ENCODE measurements at regions of chr9 and their contacts with region 1.

Region 1: DNA sequence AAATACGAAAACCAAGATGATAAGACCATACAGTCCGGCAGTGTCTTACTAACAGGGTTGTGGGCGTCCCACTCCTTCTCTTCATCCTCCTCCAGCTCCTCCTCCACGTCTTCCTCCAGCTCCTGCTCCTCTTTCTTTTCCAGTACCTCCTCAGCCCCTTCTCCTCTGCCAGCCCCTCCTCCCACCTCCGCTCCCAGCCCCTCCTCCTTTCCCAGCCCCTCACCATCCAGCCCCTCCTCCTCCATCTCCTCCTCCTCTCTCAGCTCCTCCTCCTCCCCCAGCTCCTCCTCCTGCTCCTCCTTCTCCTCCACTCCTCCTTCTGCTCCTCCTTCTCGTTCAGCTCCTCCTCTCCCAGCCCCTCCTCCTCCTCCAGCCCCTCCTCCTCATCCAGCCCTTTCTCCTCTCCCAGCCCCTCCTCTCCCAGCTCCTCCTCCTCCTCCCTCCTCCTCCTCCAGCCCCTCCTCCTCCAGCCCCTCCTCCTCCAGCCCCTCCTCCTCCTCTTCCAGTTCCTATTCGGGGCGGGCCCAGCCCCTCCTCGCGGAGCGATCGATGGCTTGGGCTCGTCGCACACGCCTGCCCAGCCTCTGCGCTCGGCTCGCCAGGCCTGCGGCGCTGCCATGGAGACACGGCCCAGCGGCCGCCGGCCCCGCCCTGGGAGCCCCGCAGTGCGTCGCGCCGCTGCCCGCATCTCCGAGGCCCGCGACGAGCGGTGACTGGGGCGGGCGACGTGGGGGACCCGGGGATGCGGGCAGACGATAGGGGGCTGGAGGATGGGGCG is at the start of gene BRD3OS:
- DNase-seq: peak; percentile 88 to 97
- H3K4me3 ChIP-seq: peak within 1 kb of the TSS; percentile 72
- H3K27ac ChIP-seq: no peak within 1 kb of the TSS
- H3K4me1 ChIP-seq: peaks cover 10% of the 10 kb centered on the region
- H3K27me3 ChIP-seq: no peaks in the 10 kb centered on the region
- CTCF ChIP-seq: no peak
- total RNA-seq, gene BRD3OS: 23.7 and 26.2 TPM in 2 replicates

Region 2: GRCh38 chr9:133742849-133743444 is 282.1 kb before region 1 on chr9:
- CTCF ChIA-PET with region 1: interaction called, 10 read pairs
- POLR2A ChIA-PET with region 1: no interaction called
- intact Hi-C with region 1: no loop called
- DNase-seq: peak; percentile 40 to 88
- H3K4me3 ChIP-seq: no peak overlapping the region
- H3K27ac ChIP-seq: no peak overlapping the region
- H3K4me1 ChIP-seq: no peaks in the 10 kb centered on the region
- H3K27me3 ChIP-seq: peaks cover 42% of the 10 kb centered on the region
- CTCF ChIP-seq: peak; percentile 99

Region 3: DNA sequence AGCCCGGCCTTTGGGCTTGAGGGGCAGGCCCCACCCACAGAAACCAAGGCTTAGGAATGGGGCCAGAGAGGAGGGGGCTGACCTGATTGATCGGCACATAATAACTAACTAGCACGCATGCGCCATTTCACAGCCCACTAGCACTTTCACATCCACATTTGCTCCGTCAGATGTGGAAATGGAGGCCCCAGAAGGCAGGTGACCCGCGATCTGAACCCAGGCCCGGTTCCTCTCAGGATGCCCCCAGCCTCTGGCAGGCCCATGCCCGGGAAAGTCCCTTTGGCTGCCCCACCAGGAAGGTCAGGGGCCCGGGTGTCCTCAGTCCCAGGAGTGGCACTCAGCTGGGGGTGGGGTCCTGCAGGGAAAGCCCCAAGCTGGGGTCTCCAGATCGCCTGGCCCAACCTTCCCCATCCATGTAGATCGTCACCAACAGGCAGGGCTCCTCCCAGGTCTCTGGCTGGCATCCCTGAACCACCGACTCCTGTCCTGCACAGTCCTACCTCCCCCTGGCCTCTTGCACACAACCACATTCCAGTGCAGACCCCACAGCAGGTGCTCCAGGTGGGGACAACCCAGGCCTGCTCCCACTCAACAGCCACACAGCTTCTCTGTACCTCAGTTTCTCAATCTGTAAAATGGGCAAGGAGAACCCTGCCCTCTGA is 79.6 kb before region 1 on chr9:
- CTCF ChIA-PET with region 1: no interaction called
- POLR2A ChIA-PET with region 1: no interaction called
- intact Hi-C with region 1: no loop called
- DNase-seq: no peak
- H3K4me3 ChIP-seq: no peak overlapping the region
- H3K27ac ChIP-seq: no peak overlapping the region
- H3K4me1 ChIP-seq: no peaks in the 10 kb centered on the region
- H3K27me3 ChIP-seq: no peaks in the 10 kb centered on the region
- CTCF ChIP-seq: no peak

Region 4: GRCh38 chr9:134045841-134046544 is 21.0 kb after region 1 on chr9:
- CTCF ChIA-PET with region 1: interaction called, 19 read pairs
- POLR2A ChIA-PET with region 1: interaction called, 4 read pairs
- intact Hi-C with region 1: no loop called
- DNase-seq: no peak
- H3K4me3 ChIP-seq: no peak overlapping the region
- H3K27ac ChIP-seq: no peak overlapping the region
- H3K4me1 ChIP-seq: no peaks in the 10 kb centered on the region
- H3K27me3 ChIP-seq: no peaks in the 10 kb centered on the region
- CTCF ChIP-seq: no peak

Region 5: DNA sequence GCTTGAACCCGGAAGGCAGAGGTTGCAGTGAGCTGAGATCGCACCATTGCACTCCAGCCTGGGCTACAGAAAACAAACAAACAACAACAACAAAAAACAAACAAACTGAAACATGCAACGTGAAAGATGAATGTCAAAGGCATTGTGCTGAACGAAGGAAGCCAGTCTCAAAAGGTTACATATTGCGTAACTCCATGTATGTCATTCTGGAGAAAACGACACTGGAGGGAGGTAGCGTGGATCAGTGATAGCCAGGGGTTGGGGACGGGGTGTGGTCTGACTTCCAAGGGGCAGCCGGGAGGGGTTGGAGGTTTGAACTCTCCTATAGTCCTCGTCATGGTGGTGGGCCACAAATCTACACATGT is 98.7 kb after region 1 on chr9:
- CTCF ChIA-PET with region 1: no interaction called
- POLR2A ChIA-PET with region 1: no interaction called
- intact Hi-C with region 1: no loop called
- DNase-seq: no peak
- H3K4me3 ChIP-seq: no peak overlapping the region
- H3K27ac ChIP-seq: no peak overlapping the region
- H3K4me1 ChIP-seq: no peaks in the 10 kb centered on the region
- H3K27me3 ChIP-seq: 0 out of 2 replicates have a peak, but pooled peaks cover 3% of the 10 kb centered on the region
- CTCF ChIP-seq: no peak

Region 6: GRCh38 chr9:134135343-134136118 is 110.5 kb after region 1 on chr9 and contains the start of gene WDR5:
- CTCF ChIA-PET with region 1: interaction called, 13 read pairs
- POLR2A ChIA-PET with region 1: interaction called, 6 read pairs
- intact Hi-C with region 1: loop called (anchors 1 kb)
- DNase-seq: peak; percentile 60 to 91
- H3K4me3 ChIP-seq: peak within 1 kb of the TSS; percentile 96
- H3K27ac ChIP-seq: peak within 1 kb of the TSS; percentile 41; the same call in 1 of the 2 replicates
- H3K4me1 ChIP-seq: peaks cover 31% of the 10 kb centered on the region
- H3K27me3 ChIP-seq: no peaks in the 10 kb centered on the region
- CTCF ChIP-seq: peak; percentile 29; the same call in 1 of the 2 replicates
- total RNA-seq, gene WDR5: 53.4 and 54.9 TPM in 2 replicates

Region 7: DNA sequence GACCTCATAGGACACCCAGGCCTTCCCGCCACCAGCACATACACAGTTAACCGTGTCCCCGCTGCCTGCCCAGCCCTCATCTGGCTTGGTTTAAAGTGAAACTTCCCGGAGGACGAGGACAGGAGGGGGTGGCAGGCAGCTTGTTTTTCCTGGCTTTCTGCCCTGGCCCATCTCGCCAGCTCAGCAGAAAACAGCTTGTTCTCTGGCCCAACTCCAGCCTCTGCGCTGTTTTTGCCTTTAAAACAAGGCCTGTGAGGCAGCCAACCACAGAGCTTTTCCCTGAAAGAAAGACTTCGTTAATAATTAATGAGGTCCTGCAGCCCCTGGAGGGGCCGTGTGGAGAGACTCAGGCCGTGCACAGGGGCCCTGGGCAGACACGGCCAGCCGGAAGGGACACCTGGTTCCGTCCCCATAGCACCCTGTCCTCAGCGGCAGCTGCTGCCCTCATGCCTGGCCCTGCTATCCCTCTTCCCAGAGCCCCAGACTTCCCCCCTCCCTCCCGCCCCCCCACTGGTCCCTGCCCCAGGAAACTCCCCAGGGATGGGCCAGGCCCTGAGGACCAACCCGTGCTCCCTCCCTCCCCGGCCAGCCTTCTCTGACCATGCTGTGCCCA is 410.0 kb after region 1 on chr9:
- CTCF ChIA-PET with region 1: no interaction called
- POLR2A ChIA-PET with region 1: interaction called, 18 read pairs
- intact Hi-C with region 1: no loop called
- DNase-seq: peak in 1 of 2 experiments; percentile 74
- H3K4me3 ChIP-seq: no peak overlapping the region
- H3K27ac ChIP-seq: no peak overlapping the region
- H3K4me1 ChIP-seq: no peaks in the 10 kb centered on the region
- H3K27me3 ChIP-seq: no peaks in the 10 kb centered on the region
- CTCF ChIP-seq: no peak